ENCODE measurements at regions of chr5 and their contacts with region 1.

Region 1: GRCh38 chr5:42840269-42840668 is 28.6 kb upstream of the SELENOP start:
- DNase-seq: peak; percentile 88
- H3K4me3 Mint-ChIP-seq: peak overlapping the region; percentile 35
- H3K27ac Mint-ChIP-seq: peak overlapping the region; percentile 81
- H3K4me1 Mint-ChIP-seq: peaks cover 27% of the 10 kb centered on the region
- H3K27me3 Mint-ChIP-seq: no peaks in the 10 kb centered on the region
- CTCF ChIP-seq: no peak

Region 2: DNA sequence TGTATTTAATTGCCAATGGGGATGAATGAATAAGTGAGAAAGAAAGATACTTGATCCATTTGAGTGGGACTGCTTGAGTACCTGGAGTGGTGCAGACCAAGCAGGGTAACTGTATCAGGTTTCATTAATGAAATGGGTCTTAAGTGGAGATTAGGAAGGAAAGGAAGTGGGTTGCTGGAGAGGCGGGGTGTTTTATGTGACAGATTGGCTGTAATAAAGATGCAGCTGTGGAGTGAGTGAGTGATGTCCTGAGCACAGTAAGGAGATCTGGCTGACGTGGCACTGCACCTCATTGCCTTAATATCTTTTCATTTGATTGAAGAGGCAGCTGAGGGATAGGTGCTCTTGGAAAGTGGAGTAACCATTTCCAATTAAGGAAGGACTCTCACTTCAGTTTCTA is 244.7 kb before region 1 on chr5:
- CTCF ChIA-PET with region 1: no interaction called
- POLR2A ChIA-PET with region 1: no interaction called
- intact Hi-C with region 1: no loop called
- DNase-seq: no peak
- H3K4me3 Mint-ChIP-seq: no peak overlapping the region
- H3K27ac Mint-ChIP-seq: peak overlapping the region; percentile 2
- H3K4me1 Mint-ChIP-seq: peaks cover 17% of the 10 kb centered on the region
- H3K27me3 Mint-ChIP-seq: no peaks in the 10 kb centered on the region
- CTCF ChIP-seq: no peak

Region 3: DNA sequence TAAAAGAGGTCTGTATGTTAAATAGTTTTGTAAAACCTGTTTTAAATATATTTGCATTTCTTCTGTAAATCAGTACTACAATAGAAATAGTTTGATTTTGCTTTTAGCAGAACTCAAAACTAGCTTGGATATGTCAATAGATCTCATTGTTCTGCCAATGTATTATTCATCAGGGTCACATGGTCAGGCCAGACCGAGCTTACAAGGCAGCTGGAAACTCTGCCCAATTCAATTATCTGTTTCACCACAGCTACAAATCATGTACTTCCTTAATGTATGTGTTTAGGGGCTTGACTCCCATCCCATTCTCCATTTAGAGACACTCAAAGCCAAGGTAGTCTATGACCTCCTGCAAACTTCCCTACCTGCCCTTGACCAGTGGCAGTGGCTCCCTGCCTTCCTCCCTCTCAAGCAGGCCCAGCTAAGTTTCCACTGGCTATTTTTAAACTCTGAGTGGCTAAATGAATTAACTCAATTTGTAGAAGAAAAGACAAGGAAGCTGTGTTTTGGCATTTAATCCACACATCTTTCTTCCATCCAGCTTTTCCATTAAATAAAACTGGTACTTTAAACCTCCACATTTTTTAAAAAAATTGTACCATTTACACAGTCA is 17.9 kb after region 1 on chr5:
- CTCF ChIA-PET with region 1: interaction called, 3 read pairs
- POLR2A ChIA-PET with region 1: interaction called, 20 read pairs
- intact Hi-C with region 1: no loop called
- DNase-seq: peak; percentile 24
- H3K4me3 Mint-ChIP-seq: peak overlapping the region; percentile 21
- H3K27ac Mint-ChIP-seq: peak overlapping the region; percentile 89
- H3K4me1 Mint-ChIP-seq: peaks cover 13% of the 10 kb centered on the region
- H3K27me3 Mint-ChIP-seq: no peaks in the 10 kb centered on the region
- CTCF ChIP-seq: no peak

Region 4: GRCh38 chr5:43017428-43017815 is 177.2 kb after region 1 on chr5:
- CTCF ChIA-PET with region 1: no interaction called
- POLR2A ChIA-PET with region 1: no interaction called
- intact Hi-C with region 1: no loop called
- DNase-seq: no peak
- H3K4me3 Mint-ChIP-seq: no peak overlapping the region
- H3K27ac Mint-ChIP-seq: no peak overlapping the region
- H3K4me1 Mint-ChIP-seq: no peaks in the 10 kb centered on the region
- H3K27me3 Mint-ChIP-seq: no peaks in the 10 kb centered on the region
- CTCF ChIP-seq: no peak

Measured in MCF 10A (cell line).